Spleen (tissue), 13 donors: ENCODE measurements at regions of chr11 and their contacts with region 1.

Region 1: DNA sequence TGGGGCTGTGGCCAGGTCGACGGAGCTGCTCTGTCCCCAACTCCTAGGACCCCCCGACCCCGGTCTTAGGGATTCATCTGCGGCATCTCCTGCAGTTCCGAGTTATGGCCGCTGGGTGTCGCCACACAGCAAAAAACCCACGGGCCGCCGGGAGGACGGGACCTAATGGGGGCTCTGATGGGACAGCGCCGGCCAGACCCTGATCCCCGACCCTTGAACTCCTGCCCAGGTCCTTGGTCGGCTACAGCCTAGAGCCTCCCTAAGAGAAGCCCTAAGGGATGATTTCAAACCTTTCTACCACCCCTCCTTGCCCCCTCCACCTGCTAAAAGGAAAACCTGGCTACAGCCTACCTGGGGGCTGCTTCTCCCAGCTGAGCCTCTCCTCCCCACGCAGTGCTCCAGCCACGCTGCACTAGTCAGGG is 30.8 kb upstream of the LRRC10B start:
- DNase-seq: peak; percentile 88
- H3K4me3 ChIP-seq: no peak overlapping the region
- H3K27ac ChIP-seq: no peak overlapping the region
- H3K4me1 ChIP-seq: peaks cover 0 to 34% (median 15%) of the 10 kb centered on the region in 6 donors
- H3K27me3 ChIP-seq: peaks cover 0 to 24% (median 6%) of the 10 kb centered on the region in 7 donors
- CTCF ChIP-seq: peak; percentile 65 to 96 (median 83)
- POLR2A ChIP-seq: no peak

Region 2: DNA sequence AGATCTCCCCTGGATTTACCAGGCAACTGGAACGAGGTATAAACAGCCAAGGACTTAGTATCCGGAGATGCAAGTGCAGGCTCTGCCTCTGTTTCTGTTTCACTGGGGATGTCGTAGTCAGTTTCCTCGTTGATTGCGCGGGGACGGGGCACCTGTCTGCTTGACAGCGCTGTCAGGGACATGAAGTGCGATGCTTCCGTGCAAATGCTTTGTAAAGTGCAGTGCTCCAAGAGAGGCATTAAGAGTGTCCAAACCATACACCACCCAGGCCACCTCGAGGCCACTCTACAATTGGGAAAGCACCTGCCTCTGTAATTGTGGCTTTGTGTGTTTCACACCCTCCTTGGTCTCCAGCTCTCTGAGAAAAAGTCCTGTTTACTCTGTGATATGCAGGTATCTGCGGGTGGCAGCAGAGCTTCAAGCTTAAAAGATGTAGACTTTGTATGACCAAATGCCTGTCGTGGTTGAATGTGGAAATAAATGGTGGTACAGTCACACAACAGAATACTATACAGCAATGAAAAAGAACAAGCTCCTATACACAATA is 394.1 kb before region 1 on chr11:
- intact Hi-C with region 1: no loop called
- DNase-seq: no peak
- H3K4me3 ChIP-seq: peak overlapping the region in 1 of 8 donors; percentile 0
- H3K27ac ChIP-seq: peak overlapping the region; percentile 20 to 82 (median 62)
- H3K4me1 ChIP-seq: peaks cover 0 to 29% (median 18%) of the 10 kb centered on the region in 6 donors
- H3K27me3 ChIP-seq: no peaks in the 10 kb centered on the region
- CTCF ChIP-seq: no peak
- POLR2A ChIP-seq: no peak

Region 3: DNA sequence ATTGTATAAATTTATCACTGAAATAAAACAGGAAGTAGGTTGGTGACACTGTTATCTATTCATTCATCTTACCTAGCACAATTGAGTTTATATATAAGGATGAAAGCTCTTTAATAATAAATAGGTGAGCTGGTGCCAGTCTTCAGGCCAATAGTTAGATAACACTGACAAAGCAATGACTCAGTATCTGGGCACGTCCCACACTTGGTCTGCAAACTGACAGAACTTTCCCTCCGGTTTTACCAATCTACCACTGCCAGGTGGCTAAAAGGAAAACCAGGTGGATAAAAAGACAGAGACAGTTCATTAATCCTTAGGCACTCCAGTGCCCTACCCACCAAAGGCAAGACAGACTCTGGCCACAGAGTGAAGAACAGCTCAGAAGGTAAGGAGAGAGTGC is 162.5 kb before region 1 on chr11:
- intact Hi-C with region 1: no loop called
- DNase-seq: no peak
- H3K4me3 ChIP-seq: no peak overlapping the region
- H3K27ac ChIP-seq: no peak overlapping the region
- H3K4me1 ChIP-seq: no peaks in the 10 kb centered on the region
- H3K27me3 ChIP-seq: no peaks in the 10 kb centered on the region
- CTCF ChIP-seq: no peak
- POLR2A ChIP-seq: no peak

Region 4: GRCh38 chr11:61516675-61517572 is 39.2 kb after region 1 on chr11:
- intact Hi-C with region 1: loop called (anchors 5 kb)
- DNase-seq: peak; percentile 83
- H3K4me3 ChIP-seq: peak overlapping the region in 1 of 8 donors; percentile 43
- H3K27ac ChIP-seq: no peak overlapping the region
- H3K4me1 ChIP-seq: peaks cover 9 to 22% (median 12%) of the 10 kb centered on the region in 6 donors
- H3K27me3 ChIP-seq: peaks cover 0 to 49% (median 15%) of the 10 kb centered on the region in 7 donors
- CTCF ChIP-seq: peak; percentile 83 to 96 (median 91)
- POLR2A ChIP-seq: no peak

Region 5: GRCh38 chr11:61639816-61640443 is 162.2 kb after region 1 on chr11:
- intact Hi-C with region 1: loop called (anchors 10 kb)
- DNase-seq: no peak
- H3K4me3 ChIP-seq: no peak overlapping the region
- H3K27ac ChIP-seq: no peak overlapping the region
- H3K4me1 ChIP-seq: peaks cover 0 to 6% (median 2%) of the 10 kb centered on the region in 6 donors
- H3K27me3 ChIP-seq: peaks cover 0 to 35% (median 0%) of the 10 kb centered on the region in 7 donors
- CTCF ChIP-seq: no peak
- POLR2A ChIP-seq: no peak